ENCODE measurements at regions of chr16 and their contacts with region 1.

Region 1: GRCh38 chr16:56964243-56965148 is 2.7 kb downstream of the CETP start:
- DNase-seq: peak; percentile 96
- ATAC-seq: peak; percentile 94
- H3K4me3 Mint-ChIP-seq: no peak overlapping the region
- H3K27ac Mint-ChIP-seq: peak overlapping the region; percentile 52
- H3K4me1 Mint-ChIP-seq: peaks cover 21% of the 10 kb centered on the region
- H3K27me3 Mint-ChIP-seq: no peaks in the 10 kb centered on the region

Region 2: GRCh38 chr16:56944954-56945839 is 19.3 kb before region 1 on chr16:
- CTCF ChIA-PET with region 1: interaction called, 56 read pairs
- DNase-seq: no peak
- ATAC-seq: peak; percentile 68
- H3K4me3 Mint-ChIP-seq: no peak overlapping the region
- H3K27ac Mint-ChIP-seq: peak overlapping the region; percentile 60
- H3K4me1 Mint-ChIP-seq: peaks cover 57% of the 10 kb centered on the region
- H3K27me3 Mint-ChIP-seq: no peaks in the 10 kb centered on the region

Region 3: DNA sequence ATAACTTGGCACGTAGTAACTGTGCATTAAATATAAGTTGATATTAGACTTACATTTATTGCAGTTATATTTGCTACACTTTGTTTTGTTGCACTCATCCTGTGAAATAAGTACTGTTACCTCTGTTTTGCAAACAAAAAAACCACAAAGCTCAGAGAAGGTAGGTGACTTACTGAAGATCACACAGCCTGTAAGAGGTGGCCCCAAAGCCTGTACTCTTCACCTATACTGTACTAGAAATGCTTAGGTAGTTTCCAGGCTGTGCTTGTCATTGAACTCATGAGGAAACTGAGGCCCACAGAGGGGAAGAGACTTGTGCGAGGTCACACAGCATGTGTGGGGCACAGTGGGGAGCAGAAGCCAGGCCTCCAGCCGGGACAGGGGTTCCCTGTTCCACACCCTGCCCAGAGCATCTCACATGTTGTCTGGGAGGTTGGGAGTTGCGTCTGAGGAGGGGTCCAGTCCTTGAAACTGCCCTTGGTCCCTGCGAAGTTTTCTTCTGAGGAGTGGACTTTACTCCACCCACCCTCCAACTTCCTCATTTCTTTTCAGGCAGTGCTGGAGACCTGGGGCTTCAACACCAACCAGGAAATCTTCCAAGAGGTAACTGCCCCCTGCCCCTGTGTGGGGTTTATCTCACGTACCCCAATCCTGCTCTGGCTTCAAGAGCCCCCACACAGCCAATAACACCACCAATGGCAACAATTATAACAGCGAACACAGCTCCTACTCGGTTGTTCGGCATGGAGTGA is 10.2 kb after region 1 on chr16:
- CTCF ChIA-PET with region 1: interaction called, 59 read pairs
- DNase-seq: no peak
- ATAC-seq: no peak
- H3K4me3 Mint-ChIP-seq: no peak overlapping the region
- H3K27ac Mint-ChIP-seq: no peak overlapping the region
- H3K4me1 Mint-ChIP-seq: peaks cover 11% of the 10 kb centered on the region
- H3K27me3 Mint-ChIP-seq: no peaks in the 10 kb centered on the region

Region 4: DNA sequence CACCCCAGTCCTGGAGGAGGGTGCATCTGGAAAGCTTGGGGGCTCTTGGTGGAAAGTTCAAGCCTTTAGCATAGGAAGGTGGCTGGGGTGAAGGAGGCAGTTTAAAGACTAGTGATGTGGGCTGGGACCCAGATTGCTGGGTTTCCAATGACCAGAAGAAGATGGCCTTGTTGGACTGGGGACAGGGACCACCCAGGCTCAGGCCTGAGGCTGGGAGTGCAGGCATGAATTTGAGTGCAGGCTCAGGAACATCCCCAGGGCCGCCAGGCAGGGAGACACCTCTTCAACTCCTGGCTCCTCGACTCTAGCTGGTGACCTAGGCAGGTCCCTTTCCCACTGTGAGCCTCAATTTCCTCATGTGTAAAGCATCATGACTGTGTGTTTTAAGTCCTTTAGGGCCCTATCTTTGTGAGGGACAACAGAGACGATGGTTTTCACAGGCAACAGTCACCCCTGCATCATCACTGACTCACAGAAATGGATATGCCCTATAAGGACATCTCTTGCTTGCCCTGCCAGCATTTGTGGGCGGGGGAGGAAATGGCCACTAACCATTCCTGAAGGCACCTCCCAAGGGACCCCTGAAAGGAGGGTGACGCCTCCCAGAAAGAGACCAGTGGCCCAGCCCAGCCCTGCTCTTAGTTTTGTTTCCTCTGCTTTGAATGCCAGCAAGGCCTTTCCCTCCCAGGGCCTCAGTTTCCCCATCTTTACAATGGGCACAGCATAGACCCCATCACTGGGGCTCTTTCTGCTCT is 36.0 kb after region 1 on chr16:
- CTCF ChIA-PET with region 1: interaction called, 14 read pairs
- DNase-seq: peak; percentile 80
- ATAC-seq: peak; percentile 63
- H3K4me3 Mint-ChIP-seq: peak overlapping the region; percentile 51
- H3K27ac Mint-ChIP-seq: peak overlapping the region; percentile 95
- H3K4me1 Mint-ChIP-seq: peaks cover 91% of the 10 kb centered on the region
- H3K27me3 Mint-ChIP-seq: no peaks in the 10 kb centered on the region

Region 5: GRCh38 chr16:57045694-57046381 is 81.3 kb after region 1 on chr16:
- CTCF ChIA-PET with region 1: interaction called, 74 read pairs
- DNase-seq: no peak
- ATAC-seq: no peak
- H3K4me3 Mint-ChIP-seq: no peak overlapping the region
- H3K27ac Mint-ChIP-seq: no peak overlapping the region
- H3K4me1 Mint-ChIP-seq: peaks cover 40% of the 10 kb centered on the region
- H3K27me3 Mint-ChIP-seq: no peaks in the 10 kb centered on the region

Region 6: DNA sequence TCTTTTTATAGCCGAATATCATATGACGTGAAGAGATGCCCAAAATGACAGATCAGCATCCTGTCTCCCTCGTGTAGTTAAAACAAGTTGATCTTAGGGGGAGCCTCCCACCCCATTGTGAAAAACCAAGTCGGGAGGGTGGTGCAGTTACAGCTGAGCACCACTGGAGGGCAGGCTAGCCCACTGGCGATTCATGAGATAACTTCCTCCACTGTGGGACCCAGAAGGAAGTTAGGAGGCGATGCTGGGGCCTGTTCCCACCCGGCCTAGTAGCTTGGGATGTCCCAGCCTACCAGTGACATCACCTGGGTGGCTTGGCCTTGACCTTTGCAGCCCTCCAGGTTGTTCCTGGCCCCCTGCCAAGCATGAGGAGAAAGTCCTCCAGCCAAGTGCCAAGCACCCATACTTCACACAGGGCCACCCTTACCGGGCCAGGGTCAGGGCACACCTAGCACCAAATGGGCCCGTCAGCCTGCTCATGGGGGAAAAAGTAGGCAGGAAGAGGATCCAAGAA is 119.8 kb after region 1 on chr16:
- CTCF ChIA-PET with region 1: interaction called, 16 read pairs
- DNase-seq: peak; percentile 84
- ATAC-seq: peak; percentile 81
- H3K4me3 Mint-ChIP-seq: no peak overlapping the region
- H3K27ac Mint-ChIP-seq: peak overlapping the region; percentile 76
- H3K4me1 Mint-ChIP-seq: peaks cover 7% of the 10 kb centered on the region
- H3K27me3 Mint-ChIP-seq: peaks cover 6% of the 10 kb centered on the region

Measured in activated CD8-positive, alpha-beta memory T cell treated with anti-CD3 and anti-CD28 coated beads, Interleukin-2, amount 10 ng/mL, durations not matched to agents 7 days and 5 days (primary cell).